Pancreas (tissue), 10 donors: ENCODE measurements at regions of chr10 and their contacts with region 1.

Region 1: GRCh38 chr10:60456053-60456452 is 66.4 kb upstream of the ANK3 start:
- DNase-seq: no peak
- ATAC-seq: no peak
- H3K4me3 ChIP-seq: no peak overlapping the region
- H3K27ac ChIP-seq: no peak overlapping the region
- H3K4me1 ChIP-seq: peaks cover 0 to 4% (median 0%) of the 10 kb centered on the region in 3 donors
- H3K27me3 ChIP-seq: no peaks in the 10 kb centered on the region
- CTCF ChIP-seq: no peak

Region 2: GRCh38 chr10:59625721-59626522 is 830.1 kb before region 1 on chr10:
- intact Hi-C with region 1: no loop called
- DNase-seq: peak in 3 of 6 donors; percentile 32 to 55 (median 33)
- ATAC-seq: peak; percentile 82 to 93 (median 91)
- H3K4me3 ChIP-seq: no peak overlapping the region
- H3K27ac ChIP-seq: no peak overlapping the region
- H3K4me1 ChIP-seq: peaks cover 0 to 3% (median 0%) of the 10 kb centered on the region in 3 donors
- H3K27me3 ChIP-seq: no peaks in the 10 kb centered on the region
- CTCF ChIP-seq: peak; percentile 44 to 72 (median 59)

Region 3: GRCh38 chr10:60570272-60570865 is 114.3 kb after region 1 on chr10:
- intact Hi-C with region 1: no loop called
- DNase-seq: no peak
- ATAC-seq: no peak
- H3K4me3 ChIP-seq: no peak overlapping the region
- H3K27ac ChIP-seq: no peak overlapping the region
- H3K4me1 ChIP-seq: peaks cover 0 to 13% (median 7%) of the 10 kb centered on the region in 3 donors
- H3K27me3 ChIP-seq: no peaks in the 10 kb centered on the region
- CTCF ChIP-seq: no peak

Region 4: DNA sequence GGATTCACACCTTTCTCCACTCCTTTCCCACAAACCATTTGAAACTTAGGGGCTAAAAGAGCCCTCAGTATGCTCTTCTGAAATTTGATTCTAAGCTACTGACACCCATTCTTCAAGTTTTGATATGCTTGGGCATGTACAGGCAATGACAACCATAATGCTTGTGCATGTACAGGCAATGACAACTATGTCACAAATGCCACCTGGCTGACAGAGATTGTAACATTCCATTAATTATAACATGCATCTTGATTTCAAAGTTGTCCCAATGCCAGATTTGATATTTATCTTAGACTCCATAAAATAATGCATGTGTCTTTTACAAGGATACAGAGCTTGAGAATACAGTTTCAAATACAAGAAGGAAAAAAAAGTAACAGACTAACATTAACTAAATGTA is 304.7 kb after region 1 on chr10:
- intact Hi-C with region 1: loop called in 1 of 3 experiments (anchors 10 kb)
- DNase-seq: no peak
- ATAC-seq: no peak
- H3K4me3 ChIP-seq: no peak overlapping the region
- H3K27ac ChIP-seq: no peak overlapping the region
- H3K4me1 ChIP-seq: no peaks in the 10 kb centered on the region
- H3K27me3 ChIP-seq: no peaks in the 10 kb centered on the region
- CTCF ChIP-seq: no peak